ENCODE measurements at regions of chr11 and their contacts with region 1.

Region 1: GRCh38 chr11:92087725-92088537 is 136.7 kb upstream of the FAT3 start:
- DNase-seq: no peak
- ATAC-seq: no peak
- H3K4me3 ChIP-seq: no peak overlapping the region
- H3K4me3 Mint-ChIP-seq: no peak overlapping the region
- H3K27ac ChIP-seq: no peak overlapping the region
- H3K27ac Mint-ChIP-seq: no peak overlapping the region
- H3K4me1 ChIP-seq: no peaks in the 10 kb centered on the region
- H3K4me1 Mint-ChIP-seq: peaks cover 0 to 1% (median 0%) of the 10 kb centered on the region in 7 donors
- H3K27me3 ChIP-seq: no peaks in the 10 kb centered on the region
- H3K27me3 Mint-ChIP-seq: no peaks in the 10 kb centered on the region

Region 2: GRCh38 chr11:92071660-92072059 is 16.3 kb before region 1 on chr11:
- CTCF ChIA-PET with region 1: no interaction called
- POLR2A ChIA-PET with region 1: no interaction called
- intact Hi-C with region 1: loop called in 1 of 2 experiments (anchors 1 kb)
- DNase-seq: no peak
- ATAC-seq: no peak
- H3K4me3 ChIP-seq: no peak overlapping the region
- H3K4me3 Mint-ChIP-seq: no peak overlapping the region
- H3K27ac ChIP-seq: no peak overlapping the region
- H3K27ac Mint-ChIP-seq: no peak overlapping the region
- H3K4me1 ChIP-seq: no peaks in the 10 kb centered on the region
- H3K4me1 Mint-ChIP-seq: no peaks in the 10 kb centered on the region
- H3K27me3 ChIP-seq: no peaks in the 10 kb centered on the region
- H3K27me3 Mint-ChIP-seq: no peaks in the 10 kb centered on the region

Measured in naive thymus-derived CD4-positive, alpha-beta T cell (primary cell).